ENCODE measurements at regions of chr10 and their contacts with region 1.

Region 1: DNA sequence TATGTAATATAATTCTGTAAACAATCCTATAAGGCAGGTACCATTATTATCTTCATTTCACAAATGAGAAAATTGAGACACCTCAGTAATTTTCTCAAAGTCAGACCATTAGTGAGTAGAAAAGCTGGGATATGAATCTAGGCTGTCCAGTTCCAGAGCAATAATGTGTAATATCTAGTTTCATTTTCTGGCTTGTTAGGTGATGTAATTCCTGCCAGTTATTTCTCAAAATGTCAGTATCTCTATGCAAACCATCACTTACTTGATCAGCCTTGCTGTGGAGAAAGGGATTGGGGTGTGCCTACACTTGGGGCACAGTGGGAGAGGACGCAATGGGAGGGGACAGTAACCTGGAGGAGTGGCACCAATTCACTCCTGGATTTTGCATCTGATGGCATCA is 157.5 kb downstream of the LYZL1 start:
- DNase-seq: no peak
- ATAC-seq: no peak
- H3K4me3 Mint-ChIP-seq: no peak overlapping the region
- H3K27ac Mint-ChIP-seq: peak overlapping the region; percentile 59
- H3K4me1 Mint-ChIP-seq: peaks cover 17% of the 10 kb centered on the region
- H3K27me3 Mint-ChIP-seq: no peaks in the 10 kb centered on the region
- CTCF ChIP-seq: no peak

Region 2: GRCh38 chr10:29174335-29174734 is 272.0 kb before region 1 on chr10:
- CTCF ChIA-PET with region 1: no interaction called
- POLR2A ChIA-PET with region 1: no interaction called
- intact Hi-C with region 1: no loop called
- DNase-seq: no peak
- ATAC-seq: no peak
- H3K4me3 Mint-ChIP-seq: no peak overlapping the region
- H3K27ac Mint-ChIP-seq: no peak overlapping the region
- H3K4me1 Mint-ChIP-seq: no peaks in the 10 kb centered on the region
- H3K27me3 Mint-ChIP-seq: peaks cover 15% of the 10 kb centered on the region
- CTCF ChIP-seq: no peak

Region 3: GRCh38 chr10:29386342-29386999 is 59.9 kb before region 1 on chr10:
- CTCF ChIA-PET with region 1: interaction called, 22 read pairs
- POLR2A ChIA-PET with region 1: no interaction called
- intact Hi-C with region 1: loop called (anchors 2 kb)
- DNase-seq: peak; percentile 27
- ATAC-seq: peak; percentile 82
- H3K4me3 Mint-ChIP-seq: no peak overlapping the region
- H3K27ac Mint-ChIP-seq: no peak overlapping the region
- H3K4me1 Mint-ChIP-seq: peaks cover 3% of the 10 kb centered on the region
- H3K27me3 Mint-ChIP-seq: peaks cover 2% of the 10 kb centered on the region
- CTCF ChIP-seq: peak; percentile 61

Region 4: DNA sequence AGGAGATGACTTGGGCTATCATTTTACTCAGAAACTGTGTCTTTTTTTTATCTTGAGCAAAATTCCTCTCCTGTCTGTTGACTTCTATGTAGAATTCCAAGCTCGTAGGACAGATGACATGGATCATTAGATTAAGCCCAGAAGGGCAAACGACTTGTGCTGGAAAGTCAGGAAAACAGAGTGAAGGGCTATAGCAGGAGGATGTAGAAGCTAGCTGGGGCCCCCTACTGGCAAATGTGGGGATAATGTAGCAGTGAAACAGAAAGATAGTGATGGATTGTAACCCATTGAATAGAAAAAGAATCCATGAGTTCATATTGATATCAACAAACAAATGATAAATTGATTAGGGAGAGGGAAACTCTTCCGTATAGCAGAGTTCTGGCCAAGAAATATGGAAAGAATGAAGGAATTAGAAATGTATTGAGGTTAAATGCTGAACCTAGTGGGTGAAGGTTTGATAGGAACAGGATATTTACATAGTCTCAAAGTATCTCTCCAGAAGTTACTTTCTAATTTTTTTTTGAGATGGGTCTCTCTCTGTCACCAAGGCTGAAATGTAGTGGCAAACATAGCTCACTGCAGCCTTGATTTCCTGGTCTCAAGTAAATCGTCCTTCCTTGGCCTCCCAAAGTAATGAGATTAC is 53.8 kb before region 1 on chr10:
- CTCF ChIA-PET with region 1: interaction called, 22 read pairs
- POLR2A ChIA-PET with region 1: no interaction called
- intact Hi-C with region 1: loop called (anchors 2 kb)
- DNase-seq: peak; percentile 60
- ATAC-seq: peak; percentile 82
- H3K4me3 Mint-ChIP-seq: no peak overlapping the region
- H3K27ac Mint-ChIP-seq: no peak overlapping the region
- H3K4me1 Mint-ChIP-seq: no peaks in the 10 kb centered on the region
- H3K27me3 Mint-ChIP-seq: peaks cover 1% of the 10 kb centered on the region
- CTCF ChIP-seq: peak; percentile 91

Region 5: DNA sequence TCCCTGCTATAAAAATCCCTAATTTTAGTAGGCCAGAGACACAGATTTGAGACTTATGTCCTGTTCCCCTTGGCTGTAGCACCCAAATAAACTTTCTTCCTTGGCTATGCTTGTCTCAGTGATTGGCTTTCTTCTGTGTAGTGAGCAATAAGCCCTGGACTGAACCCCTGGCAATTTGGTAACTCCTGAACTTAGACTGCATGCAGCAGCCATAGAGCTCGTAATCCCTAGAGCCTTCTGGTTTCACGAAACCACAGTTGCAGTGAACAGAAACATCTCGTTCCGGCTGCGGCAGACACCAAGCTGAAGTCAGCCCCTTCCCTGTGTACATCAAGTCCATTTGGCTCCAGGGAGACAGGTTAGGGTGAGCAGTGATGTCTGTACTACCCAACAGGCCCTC is 14.7 kb after region 1 on chr10:
- CTCF ChIA-PET with region 1: interaction called, 14 read pairs
- POLR2A ChIA-PET with region 1: no interaction called
- intact Hi-C with region 1: no loop called
- DNase-seq: no peak
- ATAC-seq: no peak
- H3K4me3 Mint-ChIP-seq: no peak overlapping the region
- H3K27ac Mint-ChIP-seq: no peak overlapping the region
- H3K4me1 Mint-ChIP-seq: peaks cover 3% of the 10 kb centered on the region
- H3K27me3 Mint-ChIP-seq: no peaks in the 10 kb centered on the region
- CTCF ChIP-seq: no peak

Region 6: DNA sequence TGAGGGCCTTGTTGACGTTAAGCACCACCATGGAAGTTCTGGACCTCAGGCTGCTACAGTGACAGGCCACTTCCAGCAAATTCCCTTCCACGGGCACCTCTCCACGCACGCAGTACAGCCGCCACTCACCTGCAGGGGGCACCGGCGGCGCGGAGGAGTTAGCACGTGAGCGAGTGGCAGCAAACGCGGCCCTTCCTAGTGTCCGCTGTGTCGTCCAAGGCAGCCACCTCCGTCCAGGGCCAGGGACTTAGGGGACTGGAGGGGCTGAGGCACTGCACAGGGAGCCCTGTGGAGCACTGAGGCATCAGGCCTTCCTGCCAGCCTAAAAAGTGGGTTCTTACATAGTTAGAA is 24.0 kb after region 1 on chr10:
- CTCF ChIA-PET with region 1: interaction called, 14 read pairs
- POLR2A ChIA-PET with region 1: no interaction called
- intact Hi-C with region 1: no loop called
- DNase-seq: peak; percentile 51
- ATAC-seq: peak; percentile 58
- H3K4me3 Mint-ChIP-seq: no peak overlapping the region
- H3K27ac Mint-ChIP-seq: no peak overlapping the region
- H3K4me1 Mint-ChIP-seq: peaks cover 16% of the 10 kb centered on the region
- H3K27me3 Mint-ChIP-seq: no peaks in the 10 kb centered on the region
- CTCF ChIP-seq: peak; percentile 64